Activated CD4-positive, alpha-beta T cell treated with anti-CD3 and anti-CD28 coated beads for 36 hours (primary cell): ENCODE measurements at regions of chr5 and their contacts with region 1.

Region 1: DNA sequence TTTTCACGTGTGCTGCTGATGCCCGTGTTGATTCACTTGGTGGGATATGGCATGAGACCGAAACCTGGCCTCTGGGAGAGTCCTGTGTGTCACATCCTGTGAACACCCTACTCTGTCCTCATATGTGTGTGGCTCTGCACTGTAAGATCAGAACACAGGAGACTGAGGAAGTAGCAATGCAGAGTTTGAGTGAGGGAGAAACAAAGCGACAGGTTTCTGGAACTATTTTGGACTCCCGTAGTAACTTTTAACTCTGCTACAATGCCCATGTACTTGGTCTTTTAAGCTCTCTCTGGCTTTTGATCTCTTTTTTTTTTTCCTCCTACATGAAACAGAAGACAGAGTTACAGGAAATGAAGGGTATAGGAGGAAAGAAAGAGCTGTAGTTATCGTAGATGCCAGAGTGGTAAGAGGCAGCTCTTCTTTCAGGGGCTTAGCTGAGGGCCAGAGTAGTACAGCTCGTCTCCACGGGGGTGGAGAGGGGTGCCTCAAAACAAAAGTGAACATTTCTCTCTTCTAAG is 26.6 kb downstream of the GRAMD2B start:
- DNase-seq: peak; percentile 82
- ATAC-seq: peak; percentile 86
- H3K4me3 Mint-ChIP-seq: peak overlapping the region; percentile 79
- H3K27ac Mint-ChIP-seq: peak overlapping the region; percentile 100
- H3K4me1 Mint-ChIP-seq: peaks cover 82% of the 10 kb centered on the region
- H3K27me3 Mint-ChIP-seq: no peaks in the 10 kb centered on the region

Region 2: DNA sequence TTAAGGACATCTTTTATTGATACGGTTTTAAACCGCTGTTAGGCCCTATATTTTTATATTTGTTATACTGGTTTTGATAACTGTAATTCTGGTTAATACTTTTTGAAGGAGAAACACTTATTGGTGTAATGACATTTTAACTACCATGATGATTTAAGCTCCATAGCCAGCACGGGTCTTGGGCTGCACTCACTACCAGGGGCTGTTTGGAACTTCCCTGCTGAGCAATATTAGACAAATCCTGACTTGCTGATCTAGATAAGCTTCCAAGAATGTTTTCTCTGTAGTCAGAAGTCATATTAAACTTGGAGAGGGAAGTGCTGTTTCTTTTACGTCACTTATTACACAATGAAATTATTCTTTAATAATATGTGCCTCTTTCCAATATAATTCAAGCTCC is 566.6 kb before region 1 on chr5:
- CTCF ChIA-PET with region 1: no interaction called
- POLR2A ChIA-PET with region 1: no interaction called
- intact Hi-C with region 1: no loop called
- DNase-seq: no peak
- ATAC-seq: no peak
- H3K4me3 Mint-ChIP-seq: no peak overlapping the region
- H3K27ac Mint-ChIP-seq: no peak overlapping the region
- H3K4me1 Mint-ChIP-seq: no peaks in the 10 kb centered on the region
- H3K27me3 Mint-ChIP-seq: no peaks in the 10 kb centered on the region

Region 3: DNA sequence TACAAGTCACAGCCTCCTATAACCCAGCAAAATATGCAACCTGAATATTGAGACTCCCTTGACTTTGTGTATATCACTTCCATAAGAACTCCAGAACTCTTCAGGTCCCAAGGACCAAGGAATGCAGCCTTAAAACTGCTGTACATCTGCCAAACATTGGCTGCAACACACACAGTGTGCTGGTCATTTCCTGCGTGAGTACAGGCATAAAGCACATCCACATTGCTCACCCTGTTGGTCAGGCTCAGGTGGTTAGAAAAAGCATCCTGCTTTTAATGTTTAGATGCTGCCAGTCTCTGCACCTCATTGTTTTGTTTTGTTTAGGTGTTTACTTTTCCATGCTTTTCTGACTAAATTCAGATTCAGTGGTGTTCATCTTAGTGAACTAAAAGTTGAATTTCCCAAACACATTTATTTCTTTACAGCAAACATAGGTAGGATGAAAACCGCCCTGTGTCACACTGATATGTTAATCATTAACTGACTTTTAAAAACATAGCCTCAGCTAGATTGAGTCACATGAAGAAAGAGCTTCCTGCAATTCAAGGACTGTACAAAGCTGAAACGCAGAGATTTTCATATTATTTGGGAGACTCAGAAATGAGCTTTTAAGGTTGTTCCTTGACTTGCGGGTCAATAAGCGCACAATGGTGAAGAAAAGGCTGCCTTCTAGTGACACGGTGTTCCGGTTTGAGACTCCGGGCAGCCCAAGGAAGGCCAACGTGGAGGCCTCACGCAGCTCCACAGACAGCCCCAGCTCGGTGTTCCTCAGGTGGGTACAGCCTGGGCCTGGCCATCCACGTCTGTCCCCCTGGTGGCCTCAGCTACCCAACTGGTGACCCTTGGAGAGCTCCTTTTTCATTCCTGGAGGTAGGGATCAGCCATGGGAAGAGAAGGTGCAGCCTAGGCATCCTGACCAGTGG is 78.8 kb before region 1 on chr5:
- CTCF ChIA-PET with region 1: no interaction called
- POLR2A ChIA-PET with region 1: no interaction called
- intact Hi-C with region 1: loop called in 1 of 2 experiments (anchors 5 kb)
- DNase-seq: no peak
- ATAC-seq: no peak
- H3K4me3 Mint-ChIP-seq: no peak overlapping the region
- H3K27ac Mint-ChIP-seq: no peak overlapping the region
- H3K4me1 Mint-ChIP-seq: peaks cover 15% of the 10 kb centered on the region
- H3K27me3 Mint-ChIP-seq: no peaks in the 10 kb centered on the region

Region 4: DNA sequence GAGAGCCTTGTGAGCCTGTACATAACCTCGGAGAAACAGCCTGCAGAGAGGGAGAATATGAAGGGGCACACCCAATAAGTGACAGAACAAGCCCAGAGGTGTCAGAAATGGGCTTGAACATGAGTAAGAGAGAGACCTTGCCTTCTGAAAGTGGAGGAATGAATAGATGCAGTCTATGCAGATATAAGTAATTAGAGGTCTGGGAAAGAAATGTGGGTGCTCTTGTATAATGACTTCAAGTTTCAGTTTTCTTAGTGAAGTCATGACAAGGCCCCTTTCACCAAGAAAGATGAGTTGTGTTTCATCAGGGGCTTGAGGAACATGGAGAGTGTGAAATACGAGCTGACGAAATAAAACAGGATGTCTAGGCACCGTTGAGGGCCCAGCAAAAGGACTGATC is 11.5 kb before region 1 on chr5:
- CTCF ChIA-PET with region 1: interaction called, 9 read pairs
- POLR2A ChIA-PET with region 1: interaction called, 7 read pairs
- intact Hi-C with region 1: loop called (anchors 1 kb)
- DNase-seq: peak; percentile 41
- ATAC-seq: peak; percentile 99
- H3K4me3 Mint-ChIP-seq: peak overlapping the region; percentile 9
- H3K27ac Mint-ChIP-seq: peak overlapping the region; percentile 89
- H3K4me1 Mint-ChIP-seq: peaks cover 34% of the 10 kb centered on the region
- H3K27me3 Mint-ChIP-seq: no peaks in the 10 kb centered on the region

Region 5: DNA sequence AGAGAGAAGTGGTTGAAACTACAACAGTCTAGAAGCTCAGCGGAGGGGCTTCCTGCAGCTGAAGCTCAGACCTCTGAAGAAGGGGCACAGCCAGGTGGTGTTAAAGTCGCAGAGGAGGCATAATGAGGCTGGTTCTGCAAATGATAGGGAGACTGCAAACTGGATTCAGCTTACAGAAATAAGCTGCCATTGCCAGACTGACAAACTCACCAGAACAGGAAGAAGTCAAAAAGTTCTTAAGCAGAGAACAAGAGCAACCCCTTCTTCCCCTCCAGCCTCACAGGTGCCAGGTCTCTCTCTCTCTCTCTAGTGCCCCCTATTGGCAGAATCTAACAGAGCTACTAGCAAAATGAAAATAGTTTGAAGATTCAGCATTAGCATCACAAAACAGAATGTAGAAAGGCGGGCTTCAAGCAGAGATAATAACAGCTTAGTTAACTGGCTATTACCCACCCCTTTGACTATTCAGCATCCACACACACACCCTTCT is 50.1 kb after region 1 on chr5:
- CTCF ChIA-PET with region 1: interaction called, 3 read pairs
- POLR2A ChIA-PET with region 1: no interaction called
- intact Hi-C with region 1: loop called in 1 of 2 experiments (anchors 5 kb)
- DNase-seq: peak; percentile 35
- ATAC-seq: peak; percentile 66
- H3K4me3 Mint-ChIP-seq: no peak overlapping the region
- H3K27ac Mint-ChIP-seq: no peak overlapping the region
- H3K4me1 Mint-ChIP-seq: peaks cover 31% of the 10 kb centered on the region
- H3K27me3 Mint-ChIP-seq: no peaks in the 10 kb centered on the region

Region 6: DNA sequence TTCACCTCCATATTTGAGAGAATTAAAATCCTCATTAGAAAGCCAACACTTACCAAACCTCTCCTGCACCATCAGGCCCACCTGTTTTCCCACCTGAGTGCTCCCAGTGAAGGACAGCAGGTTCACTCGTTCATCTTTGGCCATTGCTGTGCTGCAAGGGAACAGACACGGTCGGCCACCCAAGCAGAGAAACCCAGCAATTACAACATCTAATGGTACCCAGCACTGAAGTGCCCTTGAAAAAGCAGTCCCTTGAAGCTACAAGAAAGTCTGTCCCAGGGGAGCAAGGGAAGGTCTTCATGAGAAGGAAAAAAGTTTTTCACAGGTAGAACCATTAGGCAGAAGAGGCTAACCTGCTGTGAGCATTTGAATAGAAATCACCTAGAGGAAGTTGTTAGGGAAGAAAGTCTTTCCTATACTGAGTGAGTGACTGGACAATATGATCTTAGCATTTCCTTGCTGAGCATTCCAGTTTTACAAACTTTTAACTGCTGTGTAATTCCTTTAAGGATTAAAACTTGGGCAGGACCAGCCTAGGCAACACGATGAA is 118.5 kb after region 1 on chr5:
- CTCF ChIA-PET with region 1: no interaction called
- POLR2A ChIA-PET with region 1: no interaction called
- intact Hi-C with region 1: no loop called
- DNase-seq: no peak
- ATAC-seq: no peak
- H3K4me3 Mint-ChIP-seq: no peak overlapping the region
- H3K27ac Mint-ChIP-seq: no peak overlapping the region
- H3K4me1 Mint-ChIP-seq: no peaks in the 10 kb centered on the region
- H3K27me3 Mint-ChIP-seq: no peaks in the 10 kb centered on the region

Region 7: DNA sequence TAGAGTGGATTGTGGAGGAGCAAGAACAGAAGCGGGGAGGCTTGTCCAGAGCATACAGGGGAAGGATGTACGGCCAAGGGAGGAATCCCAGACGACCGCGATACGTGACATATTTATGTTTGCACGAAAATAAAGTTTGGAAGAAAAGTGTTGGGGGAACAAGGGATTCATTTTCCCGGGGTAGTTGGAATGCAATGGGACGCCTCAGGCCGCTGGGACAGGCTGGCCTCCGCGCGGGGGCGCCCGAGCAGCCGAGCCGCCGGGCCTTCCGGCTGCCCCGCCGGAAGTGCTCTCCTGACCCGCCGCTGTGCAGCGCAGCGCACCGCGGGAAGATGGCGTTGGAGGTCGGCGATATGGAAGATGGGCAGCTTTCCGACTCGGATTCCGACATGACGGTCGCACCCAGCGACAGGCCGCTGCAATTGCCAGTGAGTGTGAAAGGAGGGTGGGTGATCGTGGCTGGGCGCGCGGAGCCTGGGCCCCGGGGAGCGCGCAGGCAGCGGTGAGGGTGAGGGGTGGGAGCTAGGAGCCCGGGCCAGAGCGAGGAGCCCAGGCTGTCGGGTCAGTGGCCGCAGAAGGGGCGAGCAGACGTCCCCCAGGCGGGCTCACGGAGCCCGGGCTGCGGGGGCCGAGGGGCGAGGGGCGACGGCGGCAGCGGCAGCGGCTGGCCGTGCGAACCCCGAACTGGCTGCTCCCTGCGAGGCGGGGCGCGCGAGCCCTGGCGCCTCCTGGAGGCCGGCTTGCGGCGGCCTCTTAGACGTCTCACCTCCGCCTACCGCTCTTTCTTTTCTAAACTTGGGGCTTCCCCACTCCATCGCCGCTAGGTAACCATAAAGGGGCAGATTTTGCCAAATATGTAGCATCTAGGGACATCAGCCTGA is 151.1 kb after region 1 on chr5 and contains the start of gene PHAX:
- CTCF ChIA-PET with region 1: no interaction called
- POLR2A ChIA-PET with region 1: no interaction called
- intact Hi-C with region 1: loop called in 1 of 2 experiments (anchors 2 kb)
- DNase-seq: peak; percentile 87
- ATAC-seq: peak; percentile 94
- H3K4me3 Mint-ChIP-seq: peak within 1 kb of the TSS; percentile 97
- H3K27ac Mint-ChIP-seq: peak within 1 kb of the TSS; percentile 99
- H3K4me1 Mint-ChIP-seq: peaks cover 38% of the 10 kb centered on the region
- H3K27me3 Mint-ChIP-seq: no peaks in the 10 kb centered on the region
- total RNA-seq, gene PHAX: 41.4 to 49.1 TPM

Region 8: DNA sequence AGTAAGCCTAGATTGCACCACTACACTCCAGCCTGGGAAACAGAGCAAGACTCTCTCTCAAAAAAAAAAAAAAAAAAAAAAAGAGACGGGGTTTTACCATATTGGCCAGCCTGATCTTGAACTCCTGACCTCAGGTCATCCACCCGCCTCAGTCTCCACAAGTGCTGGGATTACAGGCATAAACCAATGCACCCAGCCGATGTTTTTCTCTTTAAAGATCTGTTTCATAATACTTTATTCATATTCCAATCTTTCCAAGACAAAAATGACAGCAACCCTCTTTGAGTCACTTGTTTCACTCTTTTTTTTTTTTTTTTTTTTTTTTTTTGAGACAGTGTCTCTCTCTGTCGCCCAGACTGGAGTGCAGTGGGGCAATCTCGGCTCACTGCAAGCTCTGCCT is 313.6 kb after region 1 on chr5:
- CTCF ChIA-PET with region 1: no interaction called
- POLR2A ChIA-PET with region 1: no interaction called
- intact Hi-C with region 1: loop called in 1 of 2 experiments (anchors 5 kb)
- DNase-seq: no peak
- ATAC-seq: no peak
- H3K4me3 Mint-ChIP-seq: no peak overlapping the region
- H3K27ac Mint-ChIP-seq: peak overlapping the region; percentile 76
- H3K4me1 Mint-ChIP-seq: peaks cover 43% of the 10 kb centered on the region
- H3K27me3 Mint-ChIP-seq: no peaks in the 10 kb centered on the region

Region 9: GRCh38 chr5:126988021-126988569 is 538.3 kb after region 1 on chr5:
- CTCF ChIA-PET with region 1: no interaction called
- POLR2A ChIA-PET with region 1: no interaction called
- intact Hi-C with region 1: loop called in 1 of 2 experiments (anchors 5 kb)
- DNase-seq: peak; percentile 56
- ATAC-seq: peak; percentile 95
- H3K4me3 Mint-ChIP-seq: peak overlapping the region; percentile 37
- H3K27ac Mint-ChIP-seq: peak overlapping the region; percentile 92
- H3K4me1 Mint-ChIP-seq: peaks cover 38% of the 10 kb centered on the region
- H3K27me3 Mint-ChIP-seq: no peaks in the 10 kb centered on the region